ENCODE measurements at regions of chr11 and their contacts with region 1.

Region 1: GRCh38 chr11:110199184-110199941 is 97.1 kb downstream of the RDX start:
- DNase-seq: peak; percentile 20
- ATAC-seq: peak; percentile 53; the same call in 2 of the 3 replicates
- H3K4me3 ChIP-seq: no peak overlapping the region
- H3K27ac ChIP-seq: no peak overlapping the region
- H3K4me1 ChIP-seq: no peaks in the 10 kb centered on the region
- H3K27me3 ChIP-seq: no peaks in the 10 kb centered on the region
- CTCF ChIP-seq: no peak
- EP300 ChIP-seq: no peak
- POLR2A ChIP-seq: no peak
- RAD21 ChIP-seq: no peak

Region 2: GRCh38 chr11:109892321-109892794 is 307.0 kb before region 1 on chr11:
- CTCF ChIA-PET with region 1: no interaction called
- POLR2A ChIA-PET with region 1: no interaction called
- in situ Hi-C with region 1: no loop called
- intact Hi-C with region 1: no loop called
- DNase-seq: no peak
- ATAC-seq: no peak
- H3K4me3 ChIP-seq: no peak overlapping the region
- H3K27ac ChIP-seq: no peak overlapping the region
- H3K4me1 ChIP-seq: no peaks in the 10 kb centered on the region
- H3K27me3 ChIP-seq: no peaks in the 10 kb centered on the region
- CTCF ChIP-seq: no peak
- EP300 ChIP-seq: no peak
- POLR2A ChIP-seq: no peak
- RAD21 ChIP-seq: no peak

Region 3: DNA sequence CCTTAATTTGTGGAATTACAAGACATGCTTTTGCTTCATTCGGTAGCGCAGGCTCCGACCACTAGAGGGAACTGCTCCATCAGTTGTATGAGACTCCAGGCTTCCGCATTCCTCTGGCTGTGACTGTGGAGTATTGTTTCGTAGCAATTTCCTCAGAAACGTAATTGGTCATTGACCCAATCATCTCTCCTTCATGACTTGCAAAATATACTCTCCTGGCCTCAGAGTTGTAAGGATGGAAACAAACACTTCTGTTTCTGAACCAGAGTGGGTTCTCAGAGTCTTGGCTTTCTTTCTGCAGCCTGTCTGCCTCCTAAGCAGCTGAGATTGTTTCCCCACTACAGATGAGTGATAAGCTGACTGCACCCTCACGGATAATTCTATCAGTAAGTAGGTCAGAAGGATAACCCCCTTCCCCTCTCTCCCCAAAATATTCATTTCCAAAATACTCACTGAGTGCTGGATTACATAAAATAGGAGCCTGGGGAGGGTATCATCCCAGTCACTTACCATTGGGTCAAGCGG is 253.0 kb before region 1 on chr11:
- CTCF ChIA-PET with region 1: interaction called, 4 read pairs
- POLR2A ChIA-PET with region 1: no interaction called
- in situ Hi-C with region 1: no loop called
- intact Hi-C with region 1: loop called (anchors 1 kb)
- DNase-seq: peak; percentile 78
- ATAC-seq: peak; percentile 100
- H3K4me3 ChIP-seq: peak overlapping the region; percentile 35 to 47 (median 44); a peak in 4 of 6 replicates
- H3K27ac ChIP-seq: no peak overlapping the region
- H3K4me1 ChIP-seq: 0 out of 2 replicates have a peak, but pooled peaks cover 12% of the 10 kb centered on the region
- H3K27me3 ChIP-seq: no peaks in the 10 kb centered on the region; a peak in 2 of 5 replicates
- CTCF ChIP-seq: peak; percentile 83
- EP300 ChIP-seq: 0 out of 4 replicates have a peak, but pooled peaks of 1 of the 2 experiments have one; percentile 7
- POLR2A ChIP-seq: no peak
- RAD21 ChIP-seq: peak; percentile 51; the same call in 1 of the 2 replicates

Region 4: DNA sequence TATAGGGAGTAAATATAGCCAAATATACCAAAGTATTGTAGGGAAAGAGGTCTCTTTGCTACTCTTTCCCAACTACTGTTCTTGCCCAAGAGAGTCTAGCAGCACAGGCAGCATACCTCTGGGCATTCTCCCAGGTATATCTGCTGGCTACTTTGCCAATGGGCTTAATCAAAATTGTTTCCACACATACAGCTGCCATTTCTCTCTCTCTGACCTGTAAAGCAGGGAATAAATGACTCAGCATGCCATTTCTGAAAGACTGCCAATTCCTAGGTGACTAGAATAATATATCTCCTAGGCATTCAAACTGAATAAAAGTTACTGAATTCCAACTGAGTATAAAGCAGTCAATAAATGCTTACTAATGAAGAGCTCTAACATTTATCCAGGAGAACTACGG is 52.5 kb after region 1 on chr11:
- CTCF ChIA-PET with region 1: no interaction called
- POLR2A ChIA-PET with region 1: no interaction called
- in situ Hi-C with region 1: no loop called
- intact Hi-C with region 1: loop called (anchors 5 kb)
- DNase-seq: no peak
- ATAC-seq: no peak
- H3K4me3 ChIP-seq: no peak overlapping the region
- H3K27ac ChIP-seq: no peak overlapping the region
- H3K4me1 ChIP-seq: no peaks in the 10 kb centered on the region
- H3K27me3 ChIP-seq: no peaks in the 10 kb centered on the region
- CTCF ChIP-seq: no peak
- EP300 ChIP-seq: no peak
- POLR2A ChIP-seq: no peak
- RAD21 ChIP-seq: no peak

Region 5: DNA sequence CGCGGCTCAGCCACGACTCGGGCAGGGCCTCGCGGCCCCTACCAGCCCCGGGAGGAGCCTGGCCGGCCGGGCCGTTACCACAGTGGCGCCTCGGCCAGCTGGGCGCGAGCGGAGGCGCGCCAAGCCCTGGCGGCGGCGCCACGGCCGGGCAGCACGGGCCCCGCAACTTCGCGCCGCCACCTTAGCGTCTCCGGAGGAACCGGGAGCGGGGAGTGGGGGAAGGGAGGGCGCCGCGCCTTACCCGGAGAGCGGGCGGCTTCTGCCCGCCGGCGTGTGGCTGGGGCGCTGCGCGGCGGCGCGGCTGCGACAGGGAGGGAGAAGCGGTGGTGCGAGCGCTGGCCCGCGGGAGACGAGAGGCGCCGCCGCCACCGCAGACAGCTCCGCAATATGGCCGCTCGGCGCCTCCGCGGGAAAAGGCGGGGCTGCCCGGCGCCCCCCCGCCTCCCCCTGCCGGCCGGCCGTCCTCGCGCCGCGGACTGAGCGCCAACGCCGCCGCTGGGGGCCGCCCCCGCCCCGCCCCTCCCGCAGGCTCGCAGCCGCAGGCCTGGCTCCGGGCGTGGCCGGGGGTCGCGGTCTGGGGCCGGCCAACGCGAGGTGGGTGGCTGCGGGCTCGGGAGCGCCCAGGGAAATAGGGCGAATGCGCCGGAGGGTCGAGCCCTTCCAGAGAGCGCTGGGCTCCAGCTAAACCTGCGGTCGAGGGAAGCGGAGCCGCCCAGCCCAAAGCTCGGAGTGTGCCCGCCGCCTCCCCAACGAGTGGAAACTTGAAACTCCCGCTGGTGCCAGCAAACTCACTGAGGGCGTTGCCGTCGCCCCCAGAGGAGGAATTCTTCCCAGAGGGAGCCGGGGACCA is 97.1 kb after region 1 on chr11 and contains the start of gene RDX:
- CTCF ChIA-PET with region 1: no interaction called
- POLR2A ChIA-PET with region 1: no interaction called
- in situ Hi-C with region 1: no loop called
- intact Hi-C with region 1: loop called (anchors 5 kb)
- DNase-seq: peak; percentile 52
- ATAC-seq: peak; percentile 76
- H3K4me3 ChIP-seq: peak within 1 kb of the TSS; percentile 79 to 92 (median 91)
- H3K27ac ChIP-seq: peak within 1 kb of the TSS; percentile 79
- H3K4me1 ChIP-seq: peaks cover 60% of the 10 kb centered on the region
- H3K27me3 ChIP-seq: no peaks in the 10 kb centered on the region
- CTCF ChIP-seq: no peak
- EP300 ChIP-seq: no peak
- POLR2A ChIP-seq: peak; percentile 50 to 75; a peak in 3 of 4 replicates
- RAD21 ChIP-seq: no peak
- total RNA-seq, gene RDX: 63.1 and 93.4 TPM in 2 replicates

Region 6: GRCh38 chr11:110366291-110366690 is 166.9 kb after region 1 on chr11:
- CTCF ChIA-PET with region 1: interaction called, 9 read pairs
- POLR2A ChIA-PET with region 1: no interaction called
- in situ Hi-C with region 1: no loop called
- intact Hi-C with region 1: loop called (anchors 2 kb)
- DNase-seq: no peak
- ATAC-seq: no peak; the same call in 2 of the 3 replicates
- H3K4me3 ChIP-seq: no peak overlapping the region
- H3K27ac ChIP-seq: no peak overlapping the region
- H3K4me1 ChIP-seq: peaks cover 13% of the 10 kb centered on the region
- H3K27me3 ChIP-seq: no peaks in the 10 kb centered on the region; a peak in 1 of 5 replicates
- CTCF ChIP-seq: no peak
- EP300 ChIP-seq: no peak
- POLR2A ChIP-seq: no peak
- RAD21 ChIP-seq: no peak

Region 7: DNA sequence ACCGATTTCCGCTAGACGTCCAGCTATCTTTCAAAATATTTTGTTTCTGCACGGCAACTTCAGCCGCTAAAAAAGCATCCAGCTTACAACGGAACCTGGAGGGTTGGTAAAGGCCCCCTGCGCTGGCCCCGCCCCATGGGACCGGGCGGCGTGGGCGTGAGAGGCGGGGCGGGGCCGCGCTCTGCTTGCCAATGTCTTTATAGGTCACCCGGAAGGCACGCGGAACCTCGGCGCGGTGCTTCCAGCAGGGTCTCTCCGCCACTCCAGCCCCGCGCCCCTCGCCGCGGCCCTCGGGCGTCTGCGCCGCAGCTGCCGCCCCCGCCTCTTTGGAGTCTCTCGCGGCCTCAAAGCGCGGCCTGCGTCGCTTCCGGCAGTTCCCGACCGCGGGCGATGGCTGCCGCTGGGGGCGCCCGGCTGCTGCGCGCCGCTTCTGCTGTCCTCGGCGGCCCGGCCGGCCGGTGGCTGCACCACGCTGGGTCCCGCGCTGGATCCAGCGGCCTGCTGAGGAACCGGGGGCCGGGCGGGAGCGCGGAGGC is 230.4 kb after region 1 on chr11 and contains the start of gene FDX1:
- CTCF ChIA-PET with region 1: interaction called, 12 read pairs
- POLR2A ChIA-PET with region 1: no interaction called
- in situ Hi-C with region 1: loop called (anchors 5 kb)
- intact Hi-C with region 1: loop called (anchors 1 kb)
- DNase-seq: peak; percentile 71
- ATAC-seq: peak; percentile 93
- H3K4me3 ChIP-seq: peak within 1 kb of the TSS; percentile 61 to 96 (median 91)
- H3K27ac ChIP-seq: peak within 1 kb of the TSS; percentile 80
- H3K4me1 ChIP-seq: peaks cover 26% of the 10 kb centered on the region
- H3K27me3 ChIP-seq: no peaks in the 10 kb centered on the region; a peak in 1 of 5 replicates
- CTCF ChIP-seq: peak; percentile 61; the same call in 1 of the 2 replicates
- EP300 ChIP-seq: no peak
- POLR2A ChIP-seq: peak; percentile 30 to 58; a peak in 3 of 4 replicates
- RAD21 ChIP-seq: peak; percentile 61; the same call in 1 of the 2 replicates
- total RNA-seq, gene FDX1: 13.1 and 14.5 TPM in 2 replicates

Region 8: DNA sequence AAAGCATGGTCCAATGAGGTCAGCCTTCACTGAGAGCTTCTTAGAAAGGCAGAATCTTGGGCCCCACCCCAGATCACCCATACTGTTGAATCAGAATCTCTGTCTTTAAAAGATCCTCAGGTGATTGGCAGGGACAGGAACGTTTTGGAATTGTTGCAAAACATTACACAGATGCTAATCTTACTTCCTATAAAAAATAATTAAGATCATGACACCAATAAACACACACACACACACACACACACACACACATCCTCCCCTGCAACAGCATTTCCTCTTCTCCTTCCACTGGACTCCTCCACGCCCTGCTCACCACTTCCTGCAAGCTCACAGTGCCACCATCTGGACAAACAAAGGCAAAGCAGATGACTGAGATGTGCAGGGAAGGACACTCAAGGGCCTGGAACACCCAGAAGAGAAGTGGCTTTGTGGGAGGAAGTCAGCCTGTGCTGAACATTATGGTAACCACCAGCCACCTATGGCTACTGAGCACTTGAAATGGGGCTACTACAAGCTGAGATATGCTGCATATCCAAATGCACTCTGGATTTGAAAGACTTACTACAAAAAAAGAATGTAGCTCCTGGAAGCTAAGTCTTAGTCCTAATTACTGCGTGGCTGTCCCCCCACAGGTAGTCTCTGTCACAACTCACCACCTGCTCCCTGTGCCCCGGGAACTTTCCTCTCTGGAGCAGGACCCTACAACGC is 1247.2 kb after region 1 on chr11:
- CTCF ChIA-PET with region 1: no interaction called
- POLR2A ChIA-PET with region 1: no interaction called
- in situ Hi-C with region 1: no loop called
- intact Hi-C with region 1: loop called (anchors 10 kb)
- DNase-seq: peak; percentile 82
- ATAC-seq: peak; percentile 95
- H3K4me3 ChIP-seq: no peak overlapping the region
- H3K27ac ChIP-seq: no peak overlapping the region
- H3K4me1 ChIP-seq: peaks cover 44% of the 10 kb centered on the region
- H3K27me3 ChIP-seq: peaks cover 3 to 5% of the 10 kb centered on the region in 2 experiments; a peak in 3 of 5 replicates
- CTCF ChIP-seq: peak; percentile 98
- EP300 ChIP-seq: no peak
- POLR2A ChIP-seq: no peak
- RAD21 ChIP-seq: peak; percentile 91